ENCODE measurements at regions of chr7 and their contacts with region 1.

Region 1: DNA sequence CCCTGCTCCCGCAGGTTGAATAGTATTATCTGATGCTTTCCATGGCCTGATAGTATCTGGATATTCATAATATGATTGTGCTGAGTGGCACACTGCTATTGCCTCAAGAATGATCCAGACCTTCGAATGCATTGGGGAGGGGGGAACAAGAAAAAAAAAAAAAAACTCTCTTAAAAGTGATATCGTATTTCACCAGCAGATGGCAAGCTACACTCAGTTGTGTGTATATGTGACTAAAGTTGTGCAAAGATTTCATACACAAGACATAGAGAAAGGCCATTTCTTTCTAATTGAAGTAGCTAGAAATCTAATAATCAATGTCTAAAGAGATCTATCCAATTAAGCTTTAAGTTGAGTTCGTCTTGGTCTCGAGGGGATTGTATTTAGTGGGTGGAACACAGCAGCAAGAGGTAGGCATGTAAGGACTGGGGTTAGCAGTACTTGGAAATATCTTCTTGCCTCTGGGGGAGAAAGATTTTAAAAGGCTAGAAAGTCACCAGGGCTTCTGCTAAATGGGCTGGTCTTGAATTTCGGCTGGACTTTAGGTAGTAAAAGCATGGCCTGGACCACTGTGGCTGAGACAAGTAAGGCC is 15.3 kb downstream of the SFRP4 start:
- DNase-seq: no peak
- ATAC-seq: peak; percentile 73

Region 2: DNA sequence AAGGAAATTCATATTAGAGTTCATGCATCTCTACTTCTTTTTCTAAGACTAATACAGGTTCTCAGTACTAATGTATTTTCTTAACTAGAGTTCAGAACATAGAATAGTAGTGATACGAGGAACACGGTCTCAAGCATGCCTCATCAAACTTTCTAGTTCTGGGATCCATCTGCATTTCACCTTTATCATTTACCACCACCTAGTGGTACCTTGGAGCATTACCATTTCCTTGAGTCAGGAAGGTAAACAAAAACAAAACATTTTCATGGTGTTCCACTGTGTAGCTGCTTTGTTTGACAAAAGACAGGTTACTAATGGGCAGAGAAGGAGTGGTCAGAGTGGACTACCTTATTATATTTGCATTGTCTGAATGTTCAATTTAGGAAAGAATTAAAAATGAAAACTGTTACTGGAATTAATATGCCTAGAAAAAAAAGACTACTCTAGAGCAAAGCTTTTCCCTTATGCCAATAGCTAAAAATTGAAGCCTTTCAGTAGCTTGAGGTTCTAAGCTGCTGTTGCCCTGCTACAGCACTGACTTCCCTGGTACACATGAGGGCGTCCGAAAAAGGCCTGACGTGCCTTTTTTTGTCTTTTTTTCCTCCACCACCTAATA is 321.3 kb after region 1 on chr7:
- intact Hi-C with region 1: loop called (anchors 5 kb)
- DNase-seq: no peak
- ATAC-seq: peak; percentile 92

Measured in Right ventricle myocardium superior (tissue), 1 donor.